H1 (cell line): ENCODE measurements at regions of chr1 and their contacts with region 1.

Region 1: DNA sequence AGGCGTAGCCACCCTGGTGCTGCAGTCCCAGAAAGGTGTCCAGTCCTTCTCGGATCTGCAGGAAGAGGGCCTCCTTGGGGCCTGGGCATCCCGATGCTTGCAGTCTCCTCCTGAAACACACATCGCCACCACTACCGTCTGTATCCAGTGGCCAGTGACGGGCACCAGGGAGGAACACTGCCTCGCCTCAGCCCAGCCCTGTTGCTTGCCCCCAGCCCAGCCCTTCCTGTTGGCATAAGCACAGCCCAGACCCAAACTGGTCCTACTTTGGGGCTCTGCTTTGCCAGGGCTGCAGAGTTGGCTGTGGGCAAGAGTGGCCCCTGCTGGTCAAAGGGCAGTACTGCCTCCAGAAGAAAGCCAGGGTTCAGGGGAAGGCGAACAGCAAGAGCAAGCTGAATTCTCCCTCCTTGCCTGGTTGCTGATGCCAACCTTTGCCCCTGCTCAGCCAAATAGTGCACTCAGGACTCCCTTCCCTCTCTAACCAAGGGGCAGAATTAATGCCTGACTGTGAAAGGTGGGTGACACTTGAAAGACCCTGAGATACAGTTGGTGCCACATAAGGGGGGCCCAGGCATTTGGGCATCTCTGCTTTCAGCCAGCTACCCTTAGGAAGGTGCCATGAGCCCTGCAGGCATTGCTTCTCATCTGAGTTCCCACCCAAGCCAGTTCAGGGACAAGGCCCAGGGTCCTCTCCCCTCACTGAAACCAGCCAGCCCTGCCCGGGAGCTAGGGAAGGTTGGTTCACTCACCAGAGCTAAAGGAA is 11.1 kb upstream of the ARHGEF2 start:
- DNase-seq: peak in 1 of 2 experiments; percentile 91
- H3K4me3 ChIP-seq: no peak overlapping the region; a peak in 1 of 8 replicates
- H3K27ac ChIP-seq: no peak overlapping the region; the same call in 1 of the 2 replicates
- H3K4me1 ChIP-seq: peaks cover 0 to 10% (median 5%) of the 10 kb centered on the region in 4 experiments; a peak in 5 of 7 replicates
- H3K27me3 ChIP-seq: no peaks in the 10 kb centered on the region
- CTCF ChIP-seq: peak; percentile 94 to 98 (median 98)
- EP300 ChIP-seq: no peak
- POLR2A ChIP-seq: no peak
- RAD21 ChIP-seq: peak; percentile 97 to 98

Region 2: GRCh38 chr1:155940993-155941844 is 48.2 kb before region 1 on chr1 and contains the start of gene RXFP4:
- CTCF ChIA-PET with region 1: interaction called, 49 read pairs
- POLR2A ChIA-PET with region 1: interaction called, 26 read pairs
- DNase-seq: no peak
- H3K4me3 ChIP-seq: no peak within 1 kb of the TSS
- H3K27ac ChIP-seq: no peak within 1 kb of the TSS
- H3K4me1 ChIP-seq: peaks cover 0 to 9% (median 2%) of the 10 kb centered on the region in 4 experiments; a peak in 5 of 7 replicates
- H3K27me3 ChIP-seq: no peaks in the 10 kb centered on the region
- CTCF ChIP-seq: no peak
- EP300 ChIP-seq: no peak
- POLR2A ChIP-seq: no peak; a peak in 1 of 3 replicates
- RAD21 ChIP-seq: no peak
- total RNA-seq, gene RXFP4: not detected in 2 replicates

Region 3: DNA sequence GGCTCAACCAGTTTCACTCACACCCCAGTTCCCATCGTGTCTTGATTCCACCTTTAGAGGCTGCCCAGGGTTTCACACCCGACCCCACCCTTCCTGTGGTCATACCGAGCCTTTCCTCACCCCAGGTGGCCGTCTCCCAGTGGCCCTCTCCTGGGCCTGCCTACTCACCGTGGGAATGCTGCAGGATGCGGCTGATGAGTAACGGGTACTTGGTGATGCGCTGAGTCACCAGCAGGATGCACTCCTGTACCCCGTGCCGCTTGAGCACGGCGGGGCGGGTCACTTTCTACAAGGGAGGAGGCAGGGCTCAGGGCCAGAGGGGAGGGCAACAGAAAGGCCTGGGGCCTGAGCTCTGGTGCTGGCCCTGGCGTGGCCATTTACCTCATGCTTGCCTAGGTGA is 27.5 kb before region 1 on chr1:
- CTCF ChIA-PET with region 1: interaction called, 60 read pairs
- POLR2A ChIA-PET with region 1: interaction called, 282 read pairs
- DNase-seq: no peak
- H3K4me3 ChIP-seq: no peak overlapping the region
- H3K27ac ChIP-seq: no peak overlapping the region
- H3K4me1 ChIP-seq: peaks cover 0 to 4% (median 0%) of the 10 kb centered on the region in 4 experiments; a peak in 1 of 7 replicates
- H3K27me3 ChIP-seq: no peaks in the 10 kb centered on the region
- CTCF ChIP-seq: peak in 2 of 3 experiments; percentile 17 to 25; a peak in 2 of 4 replicates
- EP300 ChIP-seq: no peak
- POLR2A ChIP-seq: no peak
- RAD21 ChIP-seq: peak; percentile 10 to 33; a peak in 3 of 4 replicates

Region 4: GRCh38 chr1:155978325-155978972 is 11.0 kb before region 1 on chr1 and contains the start of gene ARHGEF2:
- CTCF ChIA-PET with region 1: interaction called, 126 read pairs
- POLR2A ChIA-PET with region 1: interaction called, 282 read pairs
- DNase-seq: peak; percentile 78 to 90
- H3K4me3 ChIP-seq: peak within 1 kb of the TSS; percentile 77 to 97 (median 90)
- H3K27ac ChIP-seq: peak within 1 kb of the TSS; percentile 88
- H3K4me1 ChIP-seq: peaks cover 31 to 49% (median 33%) of the 10 kb centered on the region in 4 experiments
- H3K27me3 ChIP-seq: no peaks in the 10 kb centered on the region
- CTCF ChIP-seq: peak; percentile 56 to 67 (median 65)
- EP300 ChIP-seq: no peak; a peak in 1 of 3 replicates
- POLR2A ChIP-seq: peak; percentile 55 to 63
- RAD21 ChIP-seq: peak; percentile 38 to 56
- total RNA-seq, gene ARHGEF2: 68.3 and 80.5 TPM in 2 replicates

Region 5: DNA sequence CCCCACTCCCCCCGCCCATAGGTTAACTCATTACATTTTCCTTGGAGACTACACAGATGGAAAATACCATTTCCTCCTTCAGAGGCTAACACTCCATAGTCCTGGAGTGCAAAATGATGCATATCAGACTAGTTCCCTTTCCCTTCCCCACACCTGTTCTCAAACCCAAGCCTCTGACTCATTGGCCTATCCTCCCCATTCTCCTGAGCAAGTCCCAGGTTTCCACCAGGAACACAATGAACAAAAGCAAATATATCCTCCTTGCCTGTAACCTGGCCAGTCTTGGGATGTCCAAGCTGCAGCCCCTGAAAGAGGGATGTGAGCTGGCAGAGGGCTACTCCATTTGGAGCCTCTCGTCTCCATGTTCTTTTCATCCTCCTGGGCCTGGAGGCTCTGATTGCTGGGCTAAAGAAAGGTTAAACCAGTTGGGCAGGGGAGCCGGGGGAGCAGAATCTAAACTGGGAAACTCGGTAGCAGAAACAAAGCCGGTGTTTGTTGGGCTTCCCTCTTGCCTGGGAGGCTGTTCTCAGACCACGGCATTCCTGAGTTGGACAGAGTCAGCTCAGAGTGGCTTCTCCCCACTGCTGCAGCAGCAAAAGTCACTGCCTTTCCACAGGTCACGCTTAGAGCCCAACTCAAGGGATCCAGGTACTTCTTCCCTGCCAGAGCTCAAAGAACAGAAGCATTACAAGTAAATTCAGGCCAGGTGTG is 17.4 kb after region 1 on chr1:
- CTCF ChIA-PET with region 1: interaction called, 27 read pairs
- POLR2A ChIA-PET with region 1: interaction called, 17 read pairs
- DNase-seq: no peak
- H3K4me3 ChIP-seq: no peak overlapping the region
- H3K27ac ChIP-seq: no peak overlapping the region
- H3K4me1 ChIP-seq: peaks cover 0 to 4% (median 1%) of the 10 kb centered on the region in 4 experiments; a peak in 3 of 7 replicates
- H3K27me3 ChIP-seq: no peaks in the 10 kb centered on the region
- CTCF ChIP-seq: no peak
- EP300 ChIP-seq: no peak
- POLR2A ChIP-seq: no peak
- RAD21 ChIP-seq: no peak

Region 6: DNA sequence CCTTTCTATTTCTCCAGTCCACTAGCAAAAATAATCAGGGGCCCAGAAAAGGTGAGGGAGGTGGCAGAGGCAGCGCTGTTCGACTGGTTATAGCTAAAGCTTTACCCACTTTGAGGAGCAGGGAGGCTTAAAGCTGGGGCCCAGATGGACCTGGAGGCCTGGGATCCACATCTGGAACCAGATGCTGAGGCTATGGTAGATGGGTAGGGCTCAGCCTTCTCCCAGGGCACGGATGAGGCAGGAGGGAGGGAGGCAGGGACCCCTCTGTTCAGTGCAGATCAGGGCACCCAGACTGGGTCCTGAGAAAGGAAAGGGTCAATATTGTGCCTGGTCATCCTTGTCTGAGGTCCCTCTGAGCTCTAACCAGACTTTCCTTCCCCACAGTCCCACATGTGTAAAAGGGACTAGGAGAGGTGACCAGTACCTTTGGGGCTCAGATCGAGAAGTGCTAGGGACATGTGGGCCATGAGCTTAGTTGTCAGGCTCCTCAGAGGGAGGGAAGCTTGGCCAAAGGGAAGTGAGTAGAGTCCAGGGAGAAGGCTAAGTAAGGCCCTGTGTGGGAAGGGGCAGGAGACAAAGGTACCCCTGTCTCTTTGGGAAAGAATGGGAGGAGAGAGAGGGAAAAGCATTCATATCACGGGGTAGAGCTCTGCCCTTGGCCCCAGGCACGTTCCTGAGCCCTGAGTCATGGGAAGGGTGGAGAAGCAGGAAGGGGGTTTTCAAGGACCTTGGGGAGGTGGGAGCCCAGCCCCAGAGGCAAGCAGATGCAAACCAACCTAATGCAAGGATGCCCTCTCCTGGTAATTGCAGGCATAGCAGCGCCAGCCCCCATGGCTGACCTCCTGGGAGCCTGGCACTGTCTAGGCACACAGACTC is 140.5 kb after region 1 on chr1:
- CTCF ChIA-PET with region 1: interaction called, 19 read pairs
- POLR2A ChIA-PET with region 1: interaction called, 4 read pairs
- DNase-seq: peak; percentile 95 to 98
- H3K4me3 ChIP-seq: 0 out of 8 replicates have a peak overlapping the region, but pooled peaks of 1 of the 4 experiments have one; percentile 5
- H3K27ac ChIP-seq: peak overlapping the region; percentile 88
- H3K4me1 ChIP-seq: peaks cover 6 to 21% (median 10%) of the 10 kb centered on the region in 4 experiments
- H3K27me3 ChIP-seq: no peaks in the 10 kb centered on the region
- CTCF ChIP-seq: peak; percentile 96 to 99 (median 99)
- EP300 ChIP-seq: peak in 1 of 2 experiments; percentile 26; a peak in 1 of 3 replicates
- POLR2A ChIP-seq: peak in 1 of 2 experiments; percentile 71; a peak in 2 of 3 replicates
- RAD21 ChIP-seq: peak; percentile 96 to 100